Heart left ventricle (tissue), 16 donors: ENCODE measurements at regions of chr4 and their contacts with region 1.

Region 1: DNA sequence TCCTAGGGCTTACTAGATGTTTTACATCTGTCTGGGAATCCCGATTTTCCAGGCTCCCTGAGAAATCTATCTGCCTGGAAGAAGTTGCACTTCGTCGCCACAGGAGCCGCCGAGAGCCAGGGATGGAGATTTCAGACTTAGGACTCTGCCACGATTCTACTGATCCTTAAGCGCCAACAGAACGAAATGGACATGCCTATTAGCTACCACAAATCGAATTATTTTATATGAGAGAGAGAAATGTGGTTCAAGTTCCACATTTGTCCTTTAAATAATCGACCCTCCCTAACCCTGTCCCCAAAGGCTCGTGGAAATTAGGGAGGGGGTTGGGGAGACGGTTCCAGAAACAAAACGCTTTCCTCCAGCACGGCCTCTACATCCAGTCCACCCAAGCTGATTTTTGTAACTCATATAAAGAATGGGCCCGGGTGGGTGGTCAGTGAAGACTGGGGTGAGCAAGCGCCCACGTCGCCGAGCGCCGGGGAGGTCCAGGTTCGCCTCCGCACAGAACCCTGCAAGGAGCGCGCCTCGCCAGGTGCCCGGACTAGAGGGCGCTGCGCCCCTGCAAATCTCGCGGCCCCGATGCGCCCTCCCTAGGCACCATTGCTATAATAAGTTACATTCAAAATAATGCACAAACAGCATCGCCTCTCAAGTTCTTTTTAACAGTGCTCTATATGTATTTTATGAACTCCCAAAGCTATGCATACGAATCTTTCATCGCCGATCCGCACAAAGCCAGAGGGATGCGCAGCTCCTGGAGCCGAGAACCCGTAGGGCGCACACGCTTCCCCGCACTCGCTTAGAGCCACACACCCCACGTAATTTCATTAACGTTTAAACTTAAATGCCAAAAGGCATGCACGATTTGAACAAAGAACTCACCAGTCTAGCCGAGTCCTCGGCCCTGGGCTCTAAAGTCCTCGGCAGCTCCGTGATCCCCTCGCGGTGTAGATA is 2.1 kb upstream of the FAT1 start:
- DNase-seq: peak; percentile 76 to 84 (median 83)
- ATAC-seq: peak; percentile 71 to 90 (median 81)
- H3K4me3 ChIP-seq: peak overlapping the region; percentile 66 to 88 (median 80)
- H3K27ac ChIP-seq: peak overlapping the region; percentile 6 to 97 (median 92)
- H3K4me1 ChIP-seq: peaks cover 0 to 22% (median 3%) of the 10 kb centered on the region in 12 donors
- H3K27me3 ChIP-seq: peaks cover 0 to 63% (median 0%) of the 10 kb centered on the region in 9 donors
- CTCF ChIP-seq: peak in 11 of 12 donors; percentile 32 to 80 (median 64)
- POLR2A ChIP-seq: no peak

Region 2: GRCh38 chr4:186676531-186677161 is 49.1 kb before region 1 on chr4:
- intact Hi-C with region 1: loop called in 5 of 10 experiments (anchors 2 to 5 kb)
- DNase-seq: no peak
- ATAC-seq: peak; percentile 91 to 96 (median 94)
- H3K4me3 ChIP-seq: peak overlapping the region in 6 of 12 donors; percentile 4 to 33 (median 12)
- H3K27ac ChIP-seq: peak overlapping the region in 11 of 12 donors; percentile 17 to 76 (median 63)
- H3K4me1 ChIP-seq: peaks cover 0 to 36% (median 16%) of the 10 kb centered on the region in 12 donors
- H3K27me3 ChIP-seq: no peaks in the 10 kb centered on the region
- CTCF ChIP-seq: no peak
- POLR2A ChIP-seq: no peak

Region 3: GRCh38 chr4:186946682-186947294 is 221.0 kb after region 1 on chr4:
- intact Hi-C with region 1: loop called in 6 of 10 experiments (anchors 1 to 10 kb)
- DNase-seq: no peak
- ATAC-seq: peak in 2 of 4 donors; percentile 29 to 36
- H3K4me3 ChIP-seq: no peak overlapping the region
- H3K27ac ChIP-seq: no peak overlapping the region
- H3K4me1 ChIP-seq: peaks cover 0 to 30% (median 9%) of the 10 kb centered on the region in 12 donors
- H3K27me3 ChIP-seq: no peaks in the 10 kb centered on the region
- CTCF ChIP-seq: peak in 4 of 12 donors; percentile 12 to 26 (median 12)
- POLR2A ChIP-seq: no peak

Region 4: DNA sequence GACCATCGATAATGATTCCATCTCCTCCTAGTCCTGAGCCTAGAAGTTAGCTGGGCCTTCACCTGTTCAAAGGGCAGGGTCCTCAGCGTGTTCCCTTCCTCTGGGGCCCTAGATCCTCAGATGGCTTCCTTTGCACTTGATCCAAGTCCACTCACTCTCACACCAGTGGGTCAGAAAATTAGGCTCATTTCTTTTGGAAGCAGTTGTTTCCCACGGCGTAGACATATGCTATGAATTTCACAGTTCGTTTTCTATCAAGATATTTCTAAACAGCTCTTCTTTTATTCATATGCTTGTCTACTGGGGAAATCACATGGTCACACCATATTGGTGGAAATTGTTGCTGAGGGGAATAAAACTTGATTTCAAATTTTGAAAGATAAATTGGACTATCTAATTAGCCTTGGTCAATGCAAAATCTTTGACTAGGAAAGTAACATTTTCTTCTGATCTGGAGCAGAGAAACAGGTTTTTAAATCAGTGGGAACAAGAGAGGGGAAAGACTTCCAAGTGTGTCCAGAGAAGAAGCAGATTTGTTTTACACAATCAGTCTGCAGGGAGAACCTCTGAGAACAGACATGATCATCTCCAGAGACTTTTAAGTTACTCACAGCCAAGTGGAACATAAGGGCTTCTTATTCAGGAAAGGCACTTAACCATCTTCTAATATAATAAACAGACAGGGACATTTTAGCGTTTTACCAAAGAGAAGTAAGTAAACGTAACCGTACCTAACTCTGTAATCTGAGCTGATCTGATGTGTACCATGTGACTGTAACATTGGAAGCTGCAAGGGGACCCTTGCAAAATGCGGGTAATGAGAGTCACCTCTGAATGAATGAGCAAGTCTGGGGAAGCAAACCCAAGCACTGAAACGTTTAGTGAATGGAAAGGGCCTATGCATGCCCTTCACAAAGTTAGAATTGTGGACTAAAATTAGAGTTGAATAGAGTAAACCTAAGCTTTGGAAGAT is 453.6 kb after region 1 on chr4:
- intact Hi-C with region 1: loop called in 2 of 10 experiments (anchors 5 to 10 kb)
- DNase-seq: no peak
- ATAC-seq: peak in 1 of 4 donors; percentile 28
- H3K4me3 ChIP-seq: no peak overlapping the region
- H3K27ac ChIP-seq: peak overlapping the region in 4 of 12 donors; percentile 42 to 60 (median 50)
- H3K4me1 ChIP-seq: peaks cover 0 to 9% (median 0%) of the 10 kb centered on the region in 12 donors
- H3K27me3 ChIP-seq: no peaks in the 10 kb centered on the region
- CTCF ChIP-seq: no peak
- POLR2A ChIP-seq: no peak